ENCODE measurements at regions of chr6 and their contacts with region 1.

Region 1: GRCh38 chr6:139291813-139292619 is at the start of gene TXLNB:
- DNase-seq: peak; percentile 93
- ATAC-seq: peak; percentile 87
- H3K4me3 Mint-ChIP-seq: peak within 1 kb of the TSS; percentile 77
- H3K27ac Mint-ChIP-seq: peak within 1 kb of the TSS; percentile 99
- H3K4me1 Mint-ChIP-seq: peaks cover 35% of the 10 kb centered on the region
- H3K27me3 Mint-ChIP-seq: no peaks in the 10 kb centered on the region
- total RNA-seq, gene TXLNB: 0.23 to 0.38 TPM

Region 2: DNA sequence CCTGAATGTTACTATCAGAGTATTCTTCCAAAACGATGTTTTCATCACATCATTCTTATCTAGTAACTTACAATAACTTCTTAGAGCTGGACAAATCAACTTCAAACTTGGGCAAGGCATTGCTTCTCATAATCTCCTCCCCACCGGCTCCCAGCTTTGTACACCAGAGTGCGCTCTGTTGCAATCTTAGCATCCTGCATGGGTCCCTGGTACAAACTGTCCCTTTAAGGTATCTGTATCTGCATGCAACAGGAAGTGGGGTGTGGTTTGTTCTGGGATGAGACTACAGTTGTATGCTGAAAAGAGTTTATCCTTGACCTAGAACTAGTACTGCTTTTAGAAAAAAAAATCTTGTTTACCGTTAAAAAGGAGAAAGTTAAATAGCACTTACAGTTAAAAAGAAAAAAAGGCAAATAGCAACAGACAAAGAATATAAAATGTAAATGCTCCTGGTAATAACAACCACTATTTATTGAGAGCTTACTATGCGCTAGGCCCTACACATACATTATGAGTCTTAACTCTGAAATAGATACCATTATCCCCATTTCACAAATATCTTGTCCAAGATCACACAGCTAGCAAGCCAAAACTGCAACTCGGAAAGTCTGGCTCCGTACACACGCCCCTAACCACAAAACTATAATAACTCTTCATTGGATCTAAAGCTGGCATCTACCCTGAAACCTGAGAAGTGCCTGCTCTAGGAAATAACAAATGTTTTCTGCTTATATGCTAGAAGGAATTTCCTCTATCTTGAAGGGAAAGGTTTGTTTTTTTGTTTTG is 166.9 kb before region 1 on chr6:
- CTCF ChIA-PET with region 1: interaction called, 14 read pairs
- DNase-seq: peak; percentile 93
- ATAC-seq: peak; percentile 98
- H3K4me3 Mint-ChIP-seq: peak overlapping the region; percentile 60
- H3K27ac Mint-ChIP-seq: peak overlapping the region; percentile 95
- H3K4me1 Mint-ChIP-seq: peaks cover 39% of the 10 kb centered on the region
- H3K27me3 Mint-ChIP-seq: no peaks in the 10 kb centered on the region

Region 3: GRCh38 chr6:139250296-139251044 is 41.5 kb before region 1 on chr6:
- CTCF ChIA-PET with region 1: interaction called, 10 read pairs
- DNase-seq: peak; percentile 84
- ATAC-seq: peak; percentile 95
- H3K4me3 Mint-ChIP-seq: peak overlapping the region; percentile 44
- H3K27ac Mint-ChIP-seq: peak overlapping the region; percentile 86
- H3K4me1 Mint-ChIP-seq: peaks cover 40% of the 10 kb centered on the region
- H3K27me3 Mint-ChIP-seq: no peaks in the 10 kb centered on the region

Region 4: GRCh38 chr6:139323511-139324300 is 31.7 kb after region 1 on chr6:
- CTCF ChIA-PET with region 1: interaction called, 14 read pairs
- DNase-seq: peak; percentile 88
- ATAC-seq: peak; percentile 89
- H3K4me3 Mint-ChIP-seq: peak overlapping the region; percentile 65
- H3K27ac Mint-ChIP-seq: peak overlapping the region; percentile 92
- H3K4me1 Mint-ChIP-seq: peaks cover 24% of the 10 kb centered on the region
- H3K27me3 Mint-ChIP-seq: no peaks in the 10 kb centered on the region

Region 5: DNA sequence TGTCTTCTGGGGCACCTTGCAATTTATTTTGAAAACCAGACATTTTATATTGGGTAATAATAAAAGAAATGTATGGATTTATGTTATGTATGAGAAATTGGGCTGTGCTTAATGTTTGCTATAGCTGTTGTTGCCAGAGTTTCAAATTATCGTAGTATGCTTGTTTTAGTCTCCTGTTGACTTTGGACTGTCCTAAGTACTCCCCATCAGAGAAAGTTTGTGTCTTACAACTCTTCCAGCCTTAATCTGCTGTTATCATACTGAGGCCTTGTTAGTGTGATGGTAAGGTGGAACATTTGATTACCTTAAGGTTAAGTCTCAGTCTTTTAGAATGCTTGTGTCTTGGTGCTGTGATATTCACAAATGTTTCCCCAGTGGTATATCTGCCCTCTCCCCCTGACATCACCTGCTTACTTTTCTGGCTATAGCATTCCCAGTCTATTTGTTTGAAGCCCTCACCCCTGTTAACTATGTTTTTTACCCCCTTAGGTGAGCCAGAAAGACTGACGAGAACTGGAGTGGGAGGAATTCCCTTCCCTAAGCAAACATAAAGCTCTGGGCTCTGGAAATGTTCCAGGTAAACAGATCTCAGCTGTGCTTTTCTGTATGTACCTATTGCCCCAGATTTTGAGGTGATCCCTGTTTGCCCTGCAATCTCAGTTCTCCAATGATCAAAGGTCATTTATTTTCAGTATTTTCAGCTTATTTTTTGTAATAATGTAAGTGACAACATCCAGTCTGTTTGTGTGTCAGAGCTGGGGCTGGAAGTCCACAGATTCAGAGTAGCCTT is 663.5 kb after region 1 on chr6:
- CTCF ChIA-PET with region 1: no interaction called
- DNase-seq: no peak
- ATAC-seq: no peak
- H3K4me3 Mint-ChIP-seq: no peak overlapping the region
- H3K27ac Mint-ChIP-seq: no peak overlapping the region
- H3K4me1 Mint-ChIP-seq: no peaks in the 10 kb centered on the region
- H3K27me3 Mint-ChIP-seq: peaks cover 6% of the 10 kb centered on the region